Heart left ventricle (tissue), 16 donors: ENCODE measurements at regions of chr3 and their contacts with region 1.

Region 1: DNA sequence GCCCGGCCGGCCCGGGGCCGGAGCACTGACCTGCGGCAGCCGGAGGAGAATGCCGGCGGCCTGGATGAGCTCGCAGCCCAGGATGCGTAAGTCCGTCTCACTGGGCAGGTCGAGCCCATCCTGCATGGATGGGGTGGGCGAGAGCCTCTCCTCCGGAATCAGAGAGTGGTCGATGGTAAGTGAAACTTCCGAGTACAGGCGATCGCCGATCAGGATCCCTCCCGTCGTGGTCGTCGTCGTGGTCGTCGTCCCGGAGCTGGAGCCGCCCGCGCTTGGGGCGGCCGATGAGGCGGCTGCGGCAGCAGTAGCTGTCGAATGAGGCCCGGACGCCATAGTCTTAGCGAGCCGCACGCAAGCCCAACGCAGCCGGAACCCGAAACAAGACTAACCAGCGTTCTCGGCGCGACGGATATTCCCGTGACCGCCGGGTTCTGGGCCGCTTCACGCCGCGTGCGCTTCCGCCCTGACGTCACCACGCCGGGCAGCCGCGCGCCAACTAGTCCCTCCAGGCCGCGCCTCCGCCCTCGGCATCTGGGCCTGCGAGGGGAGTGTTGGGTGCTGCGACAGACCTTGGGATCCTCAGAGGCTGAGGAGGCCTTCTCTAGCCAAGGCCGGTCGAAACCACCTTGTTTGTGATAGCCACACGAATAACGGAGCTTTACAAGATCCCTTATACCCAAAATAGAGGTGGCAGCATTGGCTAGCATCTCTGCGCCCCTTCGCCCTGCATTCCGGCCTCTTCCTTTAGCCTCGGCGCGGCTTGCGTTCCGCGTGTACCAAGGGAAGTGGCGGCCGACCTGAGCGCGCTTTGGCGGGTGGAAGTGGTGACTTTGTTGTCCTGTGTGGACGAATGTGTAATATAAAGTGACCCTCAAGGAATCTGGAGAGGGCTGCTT is at the start of gene CCNL1:
- DNase-seq: peak; percentile 97 to 99 (median 98)
- ATAC-seq: peak; percentile 95 to 96 (median 96)
- H3K4me3 ChIP-seq: peak within 1 kb of the TSS; percentile 79 to 100 (median 96)
- H3K27ac ChIP-seq: peak within 1 kb of the TSS; percentile 96 to 100 (median 99)
- H3K4me1 ChIP-seq: peaks cover 25 to 66% (median 48%) of the 10 kb centered on the region in 12 donors
- H3K27me3 ChIP-seq: no peaks in the 10 kb centered on the region
- CTCF ChIP-seq: no peak
- POLR2A ChIP-seq: peak; percentile 52 to 94
- total RNA-seq, gene CCNL1: 15.5 to 66.7 (median 26.8) TPM

Region 2: GRCh38 chr3:157174649-157175498 is 14.9 kb after region 1 on chr3:
- intact Hi-C with region 1: loop called (anchors 1 to 2 kb)
- DNase-seq: peak; percentile 99 to 100 (median 99)
- ATAC-seq: peak; percentile 97 to 98 (median 97)
- H3K4me3 ChIP-seq: peak overlapping the region; percentile 15 to 79 (median 64)
- H3K27ac ChIP-seq: peak overlapping the region; percentile 91 to 98 (median 97)
- H3K4me1 ChIP-seq: peaks cover 0 to 38% (median 16%) of the 10 kb centered on the region in 12 donors
- H3K27me3 ChIP-seq: no peaks in the 10 kb centered on the region
- CTCF ChIP-seq: no peak
- POLR2A ChIP-seq: peak in 1 of 2 donors; percentile 78

Region 3: DNA sequence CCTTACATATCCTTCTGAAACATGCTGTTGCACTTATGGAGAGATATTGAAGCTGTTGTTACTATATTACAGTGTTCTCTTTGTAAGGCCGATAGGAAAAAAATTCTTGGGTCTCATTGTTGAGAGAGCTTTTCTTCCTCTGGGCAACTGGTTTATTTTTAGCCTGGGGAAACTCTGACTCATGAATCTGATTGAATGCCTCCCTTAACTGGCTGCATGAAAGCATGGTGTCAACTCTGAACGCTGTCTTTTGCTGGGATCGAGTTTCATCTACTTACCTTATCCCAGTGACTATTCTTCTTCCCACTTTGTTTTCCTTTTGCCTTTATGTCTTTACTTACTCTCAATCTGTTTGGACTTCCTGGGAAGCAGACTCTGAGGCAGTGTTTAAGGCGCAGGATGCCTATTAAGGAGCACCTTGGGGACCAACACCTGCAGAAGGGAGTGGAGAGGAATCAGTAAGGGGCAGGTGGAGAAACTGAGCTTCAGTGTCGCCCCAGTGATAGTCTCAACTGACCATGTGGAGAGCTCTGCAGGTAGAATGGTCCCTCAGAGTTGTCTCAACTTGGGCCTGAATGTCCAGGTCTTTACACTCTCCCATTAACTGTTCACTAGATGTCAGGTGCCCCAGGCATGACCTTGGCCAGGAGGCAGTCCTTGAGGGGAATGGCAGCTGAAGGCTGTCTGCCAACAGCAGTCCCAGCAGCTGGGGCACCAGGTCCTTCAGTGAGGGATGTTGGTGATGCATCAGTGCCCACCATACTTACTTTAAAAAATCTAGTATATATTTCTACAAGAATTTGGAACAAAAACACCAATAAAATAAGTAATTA is 88.8 kb after region 1 on chr3:
- intact Hi-C with region 1: loop called in 2 of 10 experiments (anchors 10 kb)
- DNase-seq: peak; percentile 34 to 70 (median 67)
- ATAC-seq: peak; percentile 94 to 96 (median 94)
- H3K4me3 ChIP-seq: no peak overlapping the region
- H3K27ac ChIP-seq: peak overlapping the region; percentile 76 to 97 (median 86)
- H3K4me1 ChIP-seq: peaks cover 0 to 48% (median 26%) of the 10 kb centered on the region in 12 donors
- H3K27me3 ChIP-seq: no peaks in the 10 kb centered on the region
- CTCF ChIP-seq: no peak
- POLR2A ChIP-seq: no peak